Activated CD4-positive, alpha-beta T cell treated with anti-CD3 and anti-CD28 coated beads, Interleukin-2, amount 10 ng/mL, durations not matched to agents 7 days and 5 days (primary cell): ENCODE measurements at regions of chrX and their contacts with region 1.

Region 1: DNA sequence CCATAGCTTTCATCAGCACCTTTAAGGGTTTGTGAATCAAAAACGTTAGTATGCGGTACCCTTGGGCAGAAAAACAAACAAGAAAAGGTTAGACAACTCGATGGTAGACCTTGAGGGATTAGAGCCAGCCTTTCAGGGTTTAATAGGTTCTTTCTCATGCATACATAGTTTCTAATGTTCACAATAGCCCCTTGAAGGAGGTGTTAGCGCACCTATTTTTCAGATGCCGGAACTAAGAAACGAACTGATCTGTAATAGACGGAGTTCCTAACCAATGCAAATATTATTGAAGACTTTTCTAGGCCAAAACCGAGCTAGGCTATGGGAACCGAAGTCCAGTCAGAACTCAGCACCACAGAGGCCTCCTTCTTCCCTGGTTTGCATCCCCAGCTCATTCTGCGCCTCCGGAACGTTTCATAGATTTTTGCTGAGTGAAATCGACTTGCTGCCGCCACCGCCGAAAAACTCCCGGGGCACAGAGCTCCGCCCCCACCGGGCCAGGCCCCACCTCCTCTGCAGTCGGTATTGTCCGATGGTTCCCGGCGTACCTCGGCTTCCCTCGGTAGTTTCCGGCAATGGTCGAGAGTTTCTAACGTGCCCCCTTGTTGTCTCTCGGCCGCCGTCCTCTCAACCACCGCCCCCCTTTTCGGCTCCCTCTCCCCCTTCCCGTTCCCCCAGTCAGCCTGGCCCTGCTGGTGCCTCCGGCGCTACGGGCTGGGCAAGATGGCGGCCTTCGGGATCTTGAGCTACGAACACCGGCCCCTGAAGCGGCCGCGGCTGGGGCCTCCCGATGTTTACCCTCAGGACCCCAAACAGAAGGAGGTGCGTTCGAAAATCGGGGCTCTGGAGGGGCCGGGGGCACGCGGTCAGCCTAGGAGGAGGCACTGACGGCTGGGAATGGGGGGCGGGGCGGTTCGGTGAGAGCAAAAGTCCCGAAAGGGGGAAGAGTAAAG is at the start of gene MED12:
- DNase-seq: peak; percentile 79
- H3K4me3 Mint-ChIP-seq: peak within 1 kb of the TSS; percentile 81
- H3K27ac Mint-ChIP-seq: peak within 1 kb of the TSS; percentile 91
- H3K4me1 Mint-ChIP-seq: peaks cover 32% of the 10 kb centered on the region
- H3K27me3 Mint-ChIP-seq: no peaks in the 10 kb centered on the region
- total RNA-seq, gene MED12: 56.6 to 64.7 TPM

Region 2: DNA sequence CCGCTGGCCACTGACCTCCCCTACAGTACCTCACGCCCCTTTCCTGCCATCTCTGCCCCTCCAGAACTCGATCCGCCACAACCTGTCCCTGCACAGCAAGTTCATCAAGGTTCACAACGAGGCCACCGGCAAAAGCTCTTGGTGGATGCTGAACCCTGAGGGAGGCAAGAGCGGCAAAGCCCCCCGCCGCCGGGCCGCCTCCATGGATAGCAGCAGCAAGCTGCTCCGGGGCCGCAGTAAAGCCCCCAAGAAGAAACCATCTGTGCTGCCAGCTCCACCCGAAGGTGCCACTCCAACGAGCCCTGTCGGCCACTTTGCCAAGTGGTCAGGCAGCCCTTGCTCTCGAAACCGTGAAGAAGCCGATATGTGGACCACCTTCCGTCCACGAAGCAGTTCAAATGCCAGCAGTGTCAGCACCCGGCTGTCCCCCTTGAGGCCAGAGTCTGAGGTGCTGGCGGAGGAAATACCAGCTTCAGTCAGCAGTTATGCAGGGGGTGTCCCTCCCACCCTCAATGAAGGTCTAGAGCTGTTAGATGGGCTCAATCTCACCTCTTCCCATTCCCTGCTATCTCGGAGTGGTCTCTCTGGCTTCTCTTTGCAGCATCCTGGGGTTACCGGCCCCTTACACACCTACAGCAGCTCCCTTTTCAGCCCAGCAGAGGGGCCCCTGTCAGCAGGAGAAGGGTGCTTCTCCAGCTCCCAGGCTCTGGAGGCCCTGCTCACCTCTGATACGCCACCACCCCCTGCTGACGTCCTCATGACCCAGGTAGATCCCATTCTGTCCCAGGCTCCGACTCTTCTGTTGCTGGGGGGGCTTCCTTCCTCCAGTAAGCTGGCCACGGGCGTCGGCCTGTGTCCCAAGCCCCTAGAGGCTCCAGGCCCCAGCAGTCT is 17.4 kb before region 1 on chrX:
- CTCF ChIA-PET with region 1: interaction called, 15 read pairs
- POLR2A ChIA-PET with region 1: interaction called, 3 read pairs
- DNase-seq: no peak
- H3K4me3 Mint-ChIP-seq: no peak overlapping the region
- H3K27ac Mint-ChIP-seq: peak overlapping the region; percentile 54
- H3K4me1 Mint-ChIP-seq: peaks cover 63% of the 10 kb centered on the region
- H3K27me3 Mint-ChIP-seq: no peaks in the 10 kb centered on the region

Region 3: GRCh38 chrX:71128915-71129765 is 10.8 kb after region 1 on chrX:
- CTCF ChIA-PET with region 1: interaction called, 10 read pairs
- POLR2A ChIA-PET with region 1: no interaction called
- DNase-seq: peak; percentile 77
- H3K4me3 Mint-ChIP-seq: no peak overlapping the region
- H3K27ac Mint-ChIP-seq: peak overlapping the region; percentile 51
- H3K4me1 Mint-ChIP-seq: peaks cover 16% of the 10 kb centered on the region
- H3K27me3 Mint-ChIP-seq: no peaks in the 10 kb centered on the region

Region 4: DNA sequence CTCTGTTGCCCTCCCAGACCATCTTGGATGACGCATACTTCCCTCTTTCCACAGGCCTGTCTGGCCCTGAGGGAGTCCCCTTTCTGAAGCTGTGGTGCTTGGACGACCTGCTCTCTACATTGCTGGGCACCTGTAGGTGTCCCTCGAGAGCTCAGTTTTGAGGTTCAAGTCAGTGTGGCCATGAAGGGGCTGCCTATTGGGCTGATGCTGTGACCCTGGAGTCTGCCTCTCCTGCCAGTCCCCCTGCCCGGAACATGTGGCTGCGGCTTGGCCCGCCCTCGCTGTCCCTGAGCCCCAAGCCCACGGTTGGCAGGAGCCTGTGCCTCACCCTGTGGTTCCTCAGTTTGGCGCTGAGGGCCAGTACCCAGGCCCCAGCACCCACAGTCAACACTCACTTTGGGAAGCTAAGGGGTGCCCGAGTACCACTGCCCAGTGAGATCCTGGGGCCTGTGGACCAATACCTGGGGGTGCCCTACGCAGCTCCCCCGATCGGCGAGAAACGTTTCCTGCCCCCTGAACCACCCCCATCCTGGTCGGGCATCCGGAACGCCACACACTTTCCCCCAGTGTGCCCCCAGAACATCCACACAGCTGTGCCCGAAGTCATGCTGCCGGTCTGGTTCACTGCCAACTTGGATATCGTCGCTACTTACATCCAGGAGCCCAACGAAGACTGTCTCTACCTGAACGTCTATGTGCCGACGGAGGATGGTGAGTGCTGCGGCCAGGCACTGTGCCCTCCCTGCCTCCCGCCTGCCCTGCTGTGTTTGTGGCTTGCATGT is 29.4 kb after region 1 on chrX:
- CTCF ChIA-PET with region 1: no interaction called
- POLR2A ChIA-PET with region 1: no interaction called
- DNase-seq: no peak
- H3K4me3 Mint-ChIP-seq: no peak overlapping the region
- H3K27ac Mint-ChIP-seq: no peak overlapping the region
- H3K4me1 Mint-ChIP-seq: peaks cover 10% of the 10 kb centered on the region
- H3K27me3 Mint-ChIP-seq: no peaks in the 10 kb centered on the region

Region 5: DNA sequence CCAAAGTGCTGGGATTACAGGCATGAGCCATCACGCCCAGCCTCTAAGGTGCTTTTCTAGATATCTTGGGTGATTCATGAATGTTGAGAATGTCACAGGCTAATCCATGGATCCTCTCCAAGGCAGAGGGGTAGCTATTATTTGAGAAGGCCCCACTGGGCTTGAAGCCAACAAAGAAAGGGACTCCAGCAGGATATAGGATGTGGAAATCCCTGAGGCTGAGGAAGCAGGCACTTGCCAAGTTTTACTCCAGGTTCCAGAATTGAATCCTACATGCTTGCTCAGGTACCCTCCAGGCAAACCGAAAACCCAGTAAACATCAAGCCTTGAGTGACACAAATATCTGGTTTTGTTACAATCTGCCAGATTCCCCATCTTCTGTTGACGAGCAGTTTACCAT is 42.2 kb after region 1 on chrX:
- CTCF ChIA-PET with region 1: no interaction called
- POLR2A ChIA-PET with region 1: no interaction called
- DNase-seq: no peak
- H3K4me3 Mint-ChIP-seq: no peak overlapping the region
- H3K27ac Mint-ChIP-seq: no peak overlapping the region
- H3K4me1 Mint-ChIP-seq: peaks cover 10% of the 10 kb centered on the region
- H3K27me3 Mint-ChIP-seq: no peaks in the 10 kb centered on the region

Region 6: GRCh38 chrX:71222929-71223328 is 104.6 kb after region 1 on chrX and contains the start of gene GJB1:
- CTCF ChIA-PET with region 1: no interaction called
- POLR2A ChIA-PET with region 1: no interaction called
- DNase-seq: no peak
- H3K4me3 Mint-ChIP-seq: no peak within 1 kb of the TSS
- H3K27ac Mint-ChIP-seq: no peak within 1 kb of the TSS
- H3K4me1 Mint-ChIP-seq: no peaks in the 10 kb centered on the region
- H3K27me3 Mint-ChIP-seq: no peaks in the 10 kb centered on the region
- total RNA-seq, gene GJB1: not detected